Activated T-helper 1 cell treated with anti-CD3 and anti-CD28 coated beads, Interleukin-12 subunit alpha, Interleukin-12 subunit beta, Interleukin-2, Interleukin-4 antibody, amounts not matched to agents 30 ng/mL and 10 ng/mL and 1 ng/mL, durations not matched to agents 14 hours and 24 hours and 36 hours (primary cell): ENCODE measurements at regions of chr11 and their contacts with region 1.

Region 1: DNA sequence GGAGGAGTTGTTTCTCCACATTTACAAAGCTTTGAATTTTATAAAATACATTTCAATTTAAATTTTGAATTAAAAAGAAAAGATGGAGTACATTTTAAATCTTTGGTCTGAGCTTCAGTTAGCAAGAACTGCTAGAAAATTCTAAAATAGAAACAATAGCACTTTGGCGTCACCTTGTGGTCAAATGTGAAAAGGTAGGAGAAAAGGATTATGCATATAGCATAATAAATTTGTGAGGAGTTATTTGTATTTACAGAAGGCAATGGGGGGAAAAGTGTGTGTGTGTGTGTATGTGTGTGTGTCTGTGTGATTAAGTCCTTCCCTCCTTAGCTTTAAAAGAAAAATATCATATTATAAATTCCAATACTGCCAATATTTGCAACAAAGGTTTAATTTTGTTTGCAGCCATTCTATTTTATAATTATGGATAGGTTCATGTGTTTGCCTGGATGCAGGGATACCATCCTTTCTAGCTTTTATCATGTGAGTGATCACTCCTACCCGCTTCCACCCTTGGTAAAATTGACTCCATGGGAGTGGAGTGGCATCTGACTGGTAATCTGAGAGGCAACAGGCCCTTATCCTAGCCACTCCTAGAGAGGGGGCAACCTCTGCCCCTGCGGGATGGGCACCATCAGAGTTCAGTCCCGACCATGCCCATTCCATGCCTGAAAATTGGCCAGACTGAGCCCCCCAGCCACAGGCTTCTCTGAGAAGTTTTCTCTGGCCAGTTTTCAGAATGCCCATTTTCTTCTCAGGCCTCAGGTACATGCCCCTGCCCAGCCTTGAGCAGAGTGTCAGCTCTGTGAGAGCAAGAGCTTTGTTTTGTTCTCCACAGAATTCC is 13.6 kb upstream of the LGR4 start:
- DNase-seq: no peak
- H3K4me3 Mint-ChIP-seq: no peak overlapping the region
- H3K27ac Mint-ChIP-seq: no peak overlapping the region
- H3K4me1 Mint-ChIP-seq: no peaks in the 10 kb centered on the region
- H3K27me3 Mint-ChIP-seq: no peaks in the 10 kb centered on the region

Region 2: GRCh38 chr11:26297189-26297975 is 1188.8 kb before region 1 on chr11:
- intact Hi-C with region 1: loop called (anchors 5 kb)
- DNase-seq: no peak
- H3K4me3 Mint-ChIP-seq: no peak overlapping the region
- H3K27ac Mint-ChIP-seq: no peak overlapping the region
- H3K4me1 Mint-ChIP-seq: no peaks in the 10 kb centered on the region
- H3K27me3 Mint-ChIP-seq: no peaks in the 10 kb centered on the region

Region 3: GRCh38 chr11:26522912-26523610 is 963.1 kb before region 1 on chr11:
- intact Hi-C with region 1: loop called (anchors 10 kb)
- DNase-seq: no peak
- H3K4me3 Mint-ChIP-seq: no peak overlapping the region
- H3K27ac Mint-ChIP-seq: no peak overlapping the region
- H3K4me1 Mint-ChIP-seq: no peaks in the 10 kb centered on the region
- H3K27me3 Mint-ChIP-seq: no peaks in the 10 kb centered on the region

Region 4: GRCh38 chr11:27183672-27184457 is 302.3 kb before region 1 on chr11:
- intact Hi-C with region 1: loop called (anchors 1 kb)
- DNase-seq: no peak
- H3K4me3 Mint-ChIP-seq: no peak overlapping the region
- H3K27ac Mint-ChIP-seq: no peak overlapping the region
- H3K4me1 Mint-ChIP-seq: no peaks in the 10 kb centered on the region
- H3K27me3 Mint-ChIP-seq: peaks cover 5% of the 10 kb centered on the region

Region 5: DNA sequence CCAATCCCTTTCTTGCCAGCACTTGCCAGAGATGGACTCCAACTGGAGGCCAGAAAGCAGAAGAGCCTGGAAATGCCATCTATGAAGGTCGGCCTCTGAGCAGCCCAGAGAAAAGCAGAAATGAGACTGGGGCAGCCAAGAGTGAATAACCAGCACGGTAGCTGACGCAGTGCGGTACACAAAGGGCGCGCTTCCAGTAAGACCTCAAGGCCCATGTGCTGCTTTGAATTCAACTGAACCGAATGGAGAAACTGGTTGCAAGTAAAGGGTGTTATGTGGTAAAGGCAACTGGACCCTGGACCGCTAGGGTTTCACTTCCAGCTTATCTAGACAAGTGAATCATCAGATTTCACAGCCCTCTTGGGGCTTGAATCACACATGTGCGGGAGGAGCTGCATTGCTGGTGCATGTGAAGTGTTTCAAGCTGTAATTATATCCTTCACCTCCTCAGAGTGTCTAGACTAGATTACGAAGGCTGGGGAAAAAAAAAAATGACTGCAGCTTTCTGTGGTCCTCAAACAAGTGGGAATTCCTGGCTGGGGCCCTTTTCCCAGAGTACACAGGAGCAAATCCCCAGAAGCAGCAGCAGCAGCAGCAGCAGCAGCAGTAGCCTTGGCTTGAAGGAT is 252.0 kb before region 1 on chr11:
- intact Hi-C with region 1: no loop called
- DNase-seq: no peak
- H3K4me3 Mint-ChIP-seq: no peak overlapping the region
- H3K27ac Mint-ChIP-seq: no peak overlapping the region
- H3K4me1 Mint-ChIP-seq: no peaks in the 10 kb centered on the region
- H3K27me3 Mint-ChIP-seq: no peaks in the 10 kb centered on the region

Region 6: GRCh38 chr11:27296497-27296896 is 189.7 kb before region 1 on chr11:
- intact Hi-C with region 1: loop called (anchors 5 kb)
- DNase-seq: no peak
- H3K4me3 Mint-ChIP-seq: no peak overlapping the region
- H3K27ac Mint-ChIP-seq: no peak overlapping the region
- H3K4me1 Mint-ChIP-seq: no peaks in the 10 kb centered on the region
- H3K27me3 Mint-ChIP-seq: peaks cover 3% of the 10 kb centered on the region